Activated CD4-positive, alpha-beta memory T cell treated with anti-CD3 and anti-CD28 coated beads, Interleukin-2, amount 10 ng/mL, durations not matched to agents 7 days and 5 days (primary cell): ENCODE measurements at regions of chr22 and their contacts with region 1.

Region 1: DNA sequence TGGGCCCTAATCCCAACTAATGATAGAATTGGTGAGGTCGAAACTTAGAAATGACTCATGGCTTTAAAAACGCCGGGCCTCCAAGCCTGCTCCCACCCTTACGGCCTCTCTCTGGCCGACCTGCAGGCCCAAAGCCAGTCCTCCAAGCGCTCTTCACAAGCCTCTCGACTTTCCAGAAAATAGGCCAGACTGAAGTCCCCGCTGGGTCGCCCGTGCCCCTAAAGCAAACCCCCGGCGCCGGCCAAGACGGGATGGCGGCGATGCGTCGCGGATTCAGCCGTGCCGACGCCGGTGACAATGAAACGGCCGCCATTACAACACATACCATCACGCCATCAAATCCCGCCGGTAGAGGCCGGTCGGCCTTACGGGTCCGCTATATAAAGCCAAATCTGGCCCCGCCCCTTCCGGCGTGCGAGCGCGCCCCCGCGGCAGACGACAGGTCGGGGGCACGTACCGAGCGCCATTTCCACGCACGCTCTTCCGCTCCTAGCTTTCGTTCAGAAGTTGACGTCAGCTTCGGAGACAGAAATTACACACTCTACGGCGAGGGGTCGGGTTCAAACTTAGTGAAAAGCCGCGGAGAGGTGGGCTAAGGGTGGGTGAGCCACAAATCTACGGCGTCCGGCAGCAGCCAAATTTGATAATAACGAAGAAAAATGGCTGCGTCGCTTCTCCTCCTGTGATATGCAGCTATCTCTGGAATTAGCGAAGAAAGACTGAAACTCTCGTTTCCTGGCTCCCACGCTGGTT is at the start of gene RPL3:
- DNase-seq: peak; percentile 96
- H3K4me3 Mint-ChIP-seq: peak within 1 kb of the TSS; percentile 95
- H3K27ac Mint-ChIP-seq: peak within 1 kb of the TSS; percentile 96
- H3K4me1 Mint-ChIP-seq: peaks cover 45% of the 10 kb centered on the region
- H3K27me3 Mint-ChIP-seq: no peaks in the 10 kb centered on the region
- total RNA-seq, gene RPL3: 1,526 to 1,529 TPM

Region 2: DNA sequence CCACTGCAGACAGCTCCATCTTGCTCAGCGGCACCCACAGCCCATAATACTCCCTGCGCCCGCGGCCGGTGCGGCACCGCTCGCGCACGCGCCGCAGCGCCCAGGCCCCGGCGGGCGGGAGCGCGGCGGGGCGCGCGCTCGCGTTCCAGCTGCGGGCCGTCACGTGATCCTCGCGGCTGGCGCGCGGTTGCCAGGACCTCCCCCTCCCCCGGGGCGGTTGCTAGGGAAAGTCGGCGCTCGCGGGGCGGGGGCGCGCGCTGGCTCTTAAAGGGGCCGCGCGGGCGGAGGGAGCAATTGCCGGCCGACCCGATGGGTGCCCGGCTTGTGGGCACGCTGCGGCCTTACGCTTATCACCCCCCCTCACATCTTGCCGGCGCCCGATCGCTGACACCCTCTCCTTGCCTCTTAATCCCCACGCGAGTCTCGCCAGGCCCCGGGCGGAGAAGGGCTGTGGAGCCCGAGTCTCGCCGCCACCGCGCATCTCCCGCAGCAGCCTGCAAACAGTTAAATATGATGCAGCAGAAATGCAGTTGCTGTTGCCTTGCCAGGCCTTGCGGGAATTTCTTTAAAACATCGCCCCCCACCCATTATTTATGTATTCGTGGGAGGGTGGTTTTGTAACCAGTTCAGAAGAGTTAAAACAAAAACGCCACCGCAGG is 447.1 kb before region 1 on chr22 and contains the start of gene CBX6:
- CTCF ChIA-PET with region 1: interaction called, 10 read pairs
- POLR2A ChIA-PET with region 1: interaction called, 51 read pairs
- DNase-seq: peak; percentile 94
- H3K4me3 Mint-ChIP-seq: peak within 1 kb of the TSS; percentile 92
- H3K27ac Mint-ChIP-seq: peak within 1 kb of the TSS; percentile 83
- H3K4me1 Mint-ChIP-seq: peaks cover 53% of the 10 kb centered on the region
- H3K27me3 Mint-ChIP-seq: peaks cover 15% of the 10 kb centered on the region
- total RNA-seq, gene CBX6: 76.5 TPM

Region 3: GRCh38 chr22:39170825-39171622 is 148.4 kb before region 1 on chr22:
- CTCF ChIA-PET with region 1: interaction called, 115 read pairs
- POLR2A ChIA-PET with region 1: interaction called, 134 read pairs
- DNase-seq: peak; percentile 86
- H3K4me3 Mint-ChIP-seq: peak overlapping the region; percentile 44
- H3K27ac Mint-ChIP-seq: no peak overlapping the region
- H3K4me1 Mint-ChIP-seq: peaks cover 37% of the 10 kb centered on the region
- H3K27me3 Mint-ChIP-seq: peaks cover 26% of the 10 kb centered on the region

Region 4: GRCh38 chr22:39306581-39307361 is 12.7 kb before region 1 on chr22:
- CTCF ChIA-PET with region 1: interaction called, 25 read pairs
- POLR2A ChIA-PET with region 1: interaction called, 26 read pairs
- DNase-seq: peak; percentile 65
- H3K4me3 Mint-ChIP-seq: no peak overlapping the region
- H3K27ac Mint-ChIP-seq: no peak overlapping the region
- H3K4me1 Mint-ChIP-seq: peaks cover 18% of the 10 kb centered on the region
- H3K27me3 Mint-ChIP-seq: no peaks in the 10 kb centered on the region

Region 5: GRCh38 chr22:39349506-39349966 is 30.1 kb after region 1 on chr22:
- CTCF ChIA-PET with region 1: no interaction called
- POLR2A ChIA-PET with region 1: no interaction called
- DNase-seq: no peak
- H3K4me3 Mint-ChIP-seq: peak overlapping the region; percentile 60
- H3K27ac Mint-ChIP-seq: no peak overlapping the region
- H3K4me1 Mint-ChIP-seq: peaks cover 2% of the 10 kb centered on the region
- H3K27me3 Mint-ChIP-seq: peaks cover 33% of the 10 kb centered on the region

Region 6: DNA sequence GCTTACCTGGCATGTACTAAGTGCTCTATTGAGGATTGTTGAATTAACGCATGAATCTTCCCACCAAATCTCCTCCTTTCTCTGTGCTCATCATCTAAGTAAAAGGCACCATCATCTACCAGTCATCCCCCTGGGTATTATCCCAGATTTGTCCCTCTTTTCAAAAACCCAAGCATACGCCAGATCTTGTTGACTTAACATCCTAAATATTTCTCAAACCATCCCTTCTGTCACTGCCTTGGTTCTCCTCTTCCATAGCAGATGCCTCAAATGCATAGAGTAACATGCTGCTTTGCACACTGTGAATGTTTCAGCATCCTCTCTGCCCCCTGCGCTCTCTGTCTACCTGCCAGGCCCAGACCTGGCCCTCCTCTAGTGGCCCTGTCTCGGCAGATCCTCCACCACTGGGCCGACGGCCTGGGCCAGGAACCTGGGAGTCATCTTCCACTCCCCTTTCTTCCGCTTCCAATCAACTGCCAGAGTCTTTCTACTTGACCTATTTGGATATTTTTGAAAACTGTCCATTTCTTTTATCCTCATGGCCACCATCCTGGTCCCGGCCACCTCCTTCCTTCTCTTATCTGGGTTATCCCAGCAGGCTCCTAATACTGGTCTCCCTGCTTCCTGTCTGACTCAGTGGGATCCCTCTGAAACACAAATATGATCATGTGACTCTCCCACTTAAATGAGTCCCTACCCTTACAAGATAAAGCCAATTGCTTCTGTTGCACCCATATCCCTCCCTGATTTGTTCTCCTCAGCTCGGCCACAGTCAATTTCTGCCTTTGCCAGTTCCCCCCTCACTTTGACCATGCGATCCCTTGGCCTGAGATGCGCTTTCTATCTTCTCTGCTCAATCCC is 76.7 kb after region 1 on chr22:
- CTCF ChIA-PET with region 1: interaction called, 11 read pairs
- POLR2A ChIA-PET with region 1: interaction called, 23 read pairs
- DNase-seq: no peak
- H3K4me3 Mint-ChIP-seq: no peak overlapping the region
- H3K27ac Mint-ChIP-seq: no peak overlapping the region
- H3K4me1 Mint-ChIP-seq: peaks cover 11% of the 10 kb centered on the region
- H3K27me3 Mint-ChIP-seq: no peaks in the 10 kb centered on the region

Region 7: GRCh38 chr22:39520054-39520891 is 200.8 kb after region 1 on chr22 and contains the start of gene ATF4:
- CTCF ChIA-PET with region 1: interaction called, 5 read pairs
- POLR2A ChIA-PET with region 1: interaction called, 106 read pairs
- DNase-seq: peak; percentile 97
- H3K4me3 Mint-ChIP-seq: peak within 1 kb of the TSS; percentile 94
- H3K27ac Mint-ChIP-seq: peak within 1 kb of the TSS; percentile 99
- H3K4me1 Mint-ChIP-seq: peaks cover 58% of the 10 kb centered on the region
- H3K27me3 Mint-ChIP-seq: peaks cover 2% of the 10 kb centered on the region
- total RNA-seq, gene ATF4: 456 to 460 TPM